Activated T-helper 1 cell treated with anti-CD3 and anti-CD28 coated beads, Interleukin-12 subunit alpha, Interleukin-12 subunit beta, Interleukin-2, Interleukin-4 antibody, amounts not matched to agents 30 ng/mL and 10 ng/mL and 1 ng/mL, durations not matched to agents 14 hours and 24 hours and 36 hours (primary cell): ENCODE measurements at regions of chr3 and their contacts with region 1.

Region 1: DNA sequence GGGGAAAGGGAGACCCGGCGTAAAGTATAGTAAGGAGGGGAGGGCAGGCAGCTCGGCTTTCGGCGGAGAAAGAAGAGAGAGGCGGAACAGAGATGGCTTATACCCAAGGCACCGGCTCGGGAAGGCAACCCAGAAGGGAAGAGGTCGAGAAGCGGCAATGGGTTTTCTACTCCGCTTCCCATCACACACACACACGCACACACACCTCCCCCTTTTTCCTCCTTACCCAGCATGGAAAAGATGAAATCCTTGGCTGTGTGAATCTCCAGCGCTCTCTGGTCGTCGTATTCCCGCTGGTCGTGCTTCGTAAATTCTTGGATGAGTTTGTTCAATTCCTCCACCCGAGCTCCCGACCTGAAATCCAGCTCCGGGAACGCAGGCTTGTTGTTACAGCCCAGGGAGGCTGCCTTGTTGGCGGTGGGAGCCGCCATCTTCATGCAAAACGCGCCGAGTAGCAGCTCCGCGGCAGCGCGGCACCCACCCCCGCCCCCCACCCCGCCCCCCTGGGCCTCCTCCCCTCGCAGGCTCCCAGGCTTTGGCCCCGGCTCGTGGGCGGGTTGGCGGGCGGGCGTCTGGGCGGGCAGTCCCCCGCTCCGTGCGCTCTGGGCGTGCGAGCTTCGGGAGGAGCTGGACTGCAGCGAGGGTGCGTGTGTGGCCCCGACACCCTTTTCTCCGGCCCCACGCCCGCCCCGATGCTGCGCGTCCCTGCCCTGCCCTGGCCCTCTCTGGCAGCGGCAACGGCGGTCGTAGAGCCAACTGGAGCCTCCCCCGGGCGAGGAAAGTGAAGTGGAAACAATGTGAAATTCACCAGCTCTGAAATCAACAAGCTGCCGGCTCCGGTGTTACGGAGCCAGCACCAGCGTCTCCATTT is at the start of gene MB21D2:
- DNase-seq: peak; percentile 73
- H3K4me3 Mint-ChIP-seq: peak within 1 kb of the TSS; percentile 95
- H3K27ac Mint-ChIP-seq: peak within 1 kb of the TSS; percentile 96
- H3K4me1 Mint-ChIP-seq: peaks cover 46% of the 10 kb centered on the region
- H3K27me3 Mint-ChIP-seq: peaks cover 17% of the 10 kb centered on the region
- total RNA-seq, gene MB21D2: 17.0 and 18.0 TPM in 2 replicates

Region 2: DNA sequence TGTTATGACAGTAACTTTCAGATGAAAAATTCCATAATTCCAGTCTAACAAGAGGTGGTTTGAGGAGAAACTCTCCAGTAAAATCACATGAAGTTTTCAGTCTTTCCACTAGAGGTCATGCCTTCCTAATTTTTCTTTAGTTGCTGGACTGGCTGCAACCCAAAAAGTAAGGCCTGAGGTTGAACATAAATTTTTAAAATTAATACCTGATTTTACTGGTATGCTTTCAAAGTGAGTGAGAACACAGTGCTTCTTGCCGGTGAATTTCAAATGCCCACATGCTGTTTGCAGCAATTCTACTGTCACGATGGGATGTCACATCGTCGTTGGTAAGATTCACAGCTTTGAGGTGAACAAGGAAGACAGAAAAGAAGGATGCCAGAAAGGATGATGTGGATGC is 101.3 kb before region 1 on chr3:
- intact Hi-C with region 1: loop called (anchors 1 kb)
- DNase-seq: no peak
- H3K4me3 Mint-ChIP-seq: peak overlapping the region; percentile 23
- H3K27ac Mint-ChIP-seq: peak overlapping the region; percentile 54
- H3K4me1 Mint-ChIP-seq: peaks cover 82% of the 10 kb centered on the region
- H3K27me3 Mint-ChIP-seq: peaks cover 2% of the 10 kb centered on the region

Region 3: DNA sequence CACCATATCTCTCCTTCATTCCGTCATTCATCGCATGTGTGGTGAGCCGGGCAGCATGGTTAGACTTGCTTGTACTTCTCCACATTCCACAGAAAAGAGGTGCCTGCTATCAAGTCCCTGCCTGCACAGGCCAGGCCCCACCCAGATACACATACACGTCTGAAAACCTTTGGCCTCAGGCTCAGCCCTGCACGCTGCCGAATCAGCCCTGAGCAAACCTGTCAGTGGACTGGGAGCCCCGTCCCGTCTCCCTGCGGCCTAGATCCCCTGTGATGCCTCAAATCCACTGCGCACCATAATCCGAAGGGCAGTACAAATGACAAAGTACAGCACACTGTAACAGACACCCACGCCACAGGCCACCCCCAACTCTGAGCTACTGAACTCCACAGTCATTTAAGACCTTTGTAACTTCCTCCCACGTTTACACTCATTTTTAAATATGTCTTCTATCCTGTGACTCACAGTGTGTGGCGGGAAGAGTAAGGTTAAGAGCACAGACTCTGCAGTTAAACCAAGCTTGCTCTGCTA is 67.1 kb before region 1 on chr3:
- intact Hi-C with region 1: loop called (anchors 1 kb)
- DNase-seq: peak; percentile 46
- H3K4me3 Mint-ChIP-seq: peak overlapping the region; percentile 53
- H3K27ac Mint-ChIP-seq: peak overlapping the region; percentile 83
- H3K4me1 Mint-ChIP-seq: peaks cover 73% of the 10 kb centered on the region
- H3K27me3 Mint-ChIP-seq: no peaks in the 10 kb centered on the region

Region 4: GRCh38 chr3:192892981-192893700 is 24.5 kb before region 1 on chr3:
- intact Hi-C with region 1: loop called (anchors 1 kb)
- DNase-seq: peak; percentile 81
- H3K4me3 Mint-ChIP-seq: peak overlapping the region; percentile 15
- H3K27ac Mint-ChIP-seq: peak overlapping the region; percentile 88
- H3K4me1 Mint-ChIP-seq: peaks cover 95% of the 10 kb centered on the region
- H3K27me3 Mint-ChIP-seq: peaks cover 2% of the 10 kb centered on the region

Region 5: GRCh38 chr3:192906949-192907348 is 10.7 kb before region 1 on chr3:
- intact Hi-C with region 1: loop called (anchors 1 kb)
- DNase-seq: no peak
- H3K4me3 Mint-ChIP-seq: no peak overlapping the region
- H3K27ac Mint-ChIP-seq: peak overlapping the region; percentile 64
- H3K4me1 Mint-ChIP-seq: peaks cover 59% of the 10 kb centered on the region
- H3K27me3 Mint-ChIP-seq: peaks cover 2% of the 10 kb centered on the region

Region 6: DNA sequence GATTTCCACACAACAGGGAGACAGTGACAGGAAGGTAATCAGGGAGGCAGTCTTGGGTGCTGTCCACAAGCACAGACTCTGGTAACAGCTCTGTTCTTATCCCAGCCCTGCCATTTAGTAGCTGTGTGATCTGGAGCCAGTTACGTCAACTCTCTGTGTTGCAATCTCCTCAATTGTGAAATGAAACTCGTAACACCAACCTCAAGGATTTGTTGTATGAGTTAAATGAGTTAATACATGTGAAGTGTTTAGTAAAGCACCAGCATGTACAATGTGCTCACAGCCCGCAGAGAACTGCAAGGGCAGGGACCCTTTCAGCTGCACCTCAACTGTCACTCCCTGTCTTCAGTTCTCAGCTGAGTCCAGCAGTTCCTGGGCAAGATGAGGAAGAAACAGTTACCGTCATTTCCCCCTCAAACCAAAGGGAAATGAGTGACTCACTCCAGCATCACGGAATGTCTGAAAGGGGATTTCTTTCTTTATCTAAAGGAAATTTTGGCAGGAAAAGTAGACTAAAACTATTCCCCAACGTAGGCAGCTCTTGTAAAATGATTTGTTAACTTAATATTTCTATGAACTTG is 39.9 kb after region 1 on chr3:
- intact Hi-C with region 1: loop called (anchors 1 kb)
- DNase-seq: peak; percentile 22
- H3K4me3 Mint-ChIP-seq: peak overlapping the region; percentile 50
- H3K27ac Mint-ChIP-seq: peak overlapping the region; percentile 82
- H3K4me1 Mint-ChIP-seq: peaks cover 32% of the 10 kb centered on the region
- H3K27me3 Mint-ChIP-seq: no peaks in the 10 kb centered on the region